HCT116 (cell line): ENCODE measurements at regions of chr17 and their contacts with region 1.

Region 1: DNA sequence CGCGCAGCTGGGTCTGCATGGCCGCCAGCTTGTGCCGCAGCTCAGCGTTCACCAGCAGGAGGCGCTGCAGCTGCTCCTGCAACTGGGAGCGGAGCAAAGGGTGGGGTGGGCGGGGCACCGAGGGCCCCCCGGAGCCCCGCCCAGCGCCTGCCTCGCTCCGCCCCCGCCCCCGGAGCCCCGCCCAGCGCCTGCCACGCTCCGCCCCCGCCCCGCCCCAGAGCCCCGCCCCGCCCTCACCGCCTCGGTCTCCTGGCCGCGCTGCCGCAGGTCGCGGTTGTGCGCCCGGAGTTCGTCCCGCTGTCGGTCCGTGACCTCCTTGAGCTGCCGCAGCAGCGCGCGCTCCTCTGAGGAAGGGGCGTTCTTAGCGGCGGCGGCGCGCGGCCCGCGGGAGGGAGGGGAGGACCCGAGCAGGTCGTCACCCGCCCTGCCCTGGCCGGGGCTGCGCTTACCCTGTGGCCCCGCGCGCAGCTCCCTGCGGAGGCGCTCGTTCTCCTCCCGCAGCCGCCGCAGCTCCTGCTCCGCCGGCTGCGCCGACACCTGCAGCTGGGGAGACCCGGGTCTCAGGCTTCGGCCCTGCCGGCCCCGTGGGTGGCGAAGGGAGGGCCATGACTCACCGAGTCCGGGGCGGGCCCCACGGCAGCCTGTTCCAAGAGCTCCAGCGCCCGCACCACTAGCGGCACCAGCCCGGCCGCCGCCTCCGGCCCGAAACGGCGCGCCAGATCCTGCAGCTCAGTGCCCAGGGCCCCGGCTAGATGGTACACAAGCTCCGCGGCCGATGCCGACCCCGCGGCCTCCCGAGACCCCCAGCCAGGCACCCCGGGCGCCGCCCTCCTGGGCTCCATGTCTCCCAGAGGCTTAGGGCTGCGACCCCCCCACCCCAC is 463 bp downstream of the RILP start:
- DNase-seq: peak; percentile 89
- ATAC-seq: peak; percentile 76
- H3K4me3 ChIP-seq: peak overlapping the region; percentile 40 to 72
- H3K27ac ChIP-seq: peak overlapping the region; percentile 94
- H3K4me1 ChIP-seq: peaks cover 23 to 48% of the 10 kb centered on the region in 2 experiments
- H3K27me3 ChIP-seq: no peaks in the 10 kb centered on the region
- CTCF ChIP-seq: peak in 2 of 3 experiments; percentile 86 to 97; a peak in 5 of 6 replicates
- POLR2A ChIP-seq: no peak
- RAD21 ChIP-seq: peak; percentile 61

Region 2: GRCh38 chr17:1260086-1260769 is 389.0 kb before region 1 on chr17:
- CTCF ChIA-PET with region 1: interaction called, 10 read pairs
- POLR2A ChIA-PET with region 1: no interaction called
- RAD21 ChIA-PET with region 1: no interaction called
- intact Hi-C with region 1: loop called (anchors 5 kb)
- DNase-seq: no peak
- ATAC-seq: no peak
- H3K4me3 ChIP-seq: peak overlapping the region; percentile 48 to 63
- H3K27ac ChIP-seq: peak overlapping the region; percentile 65
- H3K4me1 ChIP-seq: peaks cover 12 to 28% of the 10 kb centered on the region in 2 experiments
- H3K27me3 ChIP-seq: no peaks in the 10 kb centered on the region
- CTCF ChIP-seq: no peak
- POLR2A ChIP-seq: no peak
- RAD21 ChIP-seq: no peak

Region 3: DNA sequence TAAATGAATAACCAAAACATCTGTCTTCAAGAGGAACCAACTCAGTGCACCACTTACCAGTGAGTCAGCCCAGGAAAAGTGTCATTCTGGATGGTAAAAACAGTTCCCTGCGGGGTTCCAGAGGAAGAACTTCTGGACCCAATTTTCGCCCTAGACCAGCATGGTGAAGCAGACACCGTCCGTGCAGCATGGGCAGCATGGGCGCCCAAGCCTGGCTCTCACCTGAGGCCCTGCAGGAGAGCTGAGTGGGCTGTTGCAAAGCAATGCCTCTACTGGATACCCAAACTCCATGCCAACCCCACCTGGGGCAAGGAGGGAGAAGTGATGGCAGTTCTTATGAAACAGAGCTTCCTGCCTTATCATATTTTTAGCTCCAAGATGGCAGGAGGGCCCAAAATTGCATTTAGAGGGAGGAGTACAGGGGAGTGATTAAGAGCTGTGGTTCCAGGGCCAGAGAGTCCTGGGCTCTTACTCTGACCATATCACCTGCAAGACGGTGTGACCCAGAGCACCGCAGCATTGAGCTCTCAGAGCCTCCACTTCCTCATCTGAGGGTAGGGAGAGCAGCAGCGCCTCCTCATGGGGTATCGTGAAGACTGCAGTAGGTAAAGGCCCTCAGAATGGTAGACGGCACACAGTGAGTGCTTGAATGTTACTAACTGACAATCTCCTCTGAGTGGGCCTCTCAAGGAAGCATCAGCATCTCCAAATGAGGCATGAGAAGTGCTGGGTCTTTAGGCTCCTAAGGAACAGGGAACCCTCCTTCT is 116.2 kb before region 1 on chr17:
- CTCF ChIA-PET with region 1: no interaction called
- POLR2A ChIA-PET with region 1: no interaction called
- RAD21 ChIA-PET with region 1: no interaction called
- intact Hi-C with region 1: no loop called
- DNase-seq: no peak
- ATAC-seq: peak; percentile 93
- H3K4me3 ChIP-seq: no peak overlapping the region
- H3K27ac ChIP-seq: no peak overlapping the region
- H3K4me1 ChIP-seq: no peaks in the 10 kb centered on the region
- H3K27me3 ChIP-seq: no peaks in the 10 kb centered on the region
- CTCF ChIP-seq: peak; percentile 17 to 69 (median 52); a peak in 5 of 6 replicates
- POLR2A ChIP-seq: no peak
- RAD21 ChIP-seq: peak; percentile 50

Region 4: DNA sequence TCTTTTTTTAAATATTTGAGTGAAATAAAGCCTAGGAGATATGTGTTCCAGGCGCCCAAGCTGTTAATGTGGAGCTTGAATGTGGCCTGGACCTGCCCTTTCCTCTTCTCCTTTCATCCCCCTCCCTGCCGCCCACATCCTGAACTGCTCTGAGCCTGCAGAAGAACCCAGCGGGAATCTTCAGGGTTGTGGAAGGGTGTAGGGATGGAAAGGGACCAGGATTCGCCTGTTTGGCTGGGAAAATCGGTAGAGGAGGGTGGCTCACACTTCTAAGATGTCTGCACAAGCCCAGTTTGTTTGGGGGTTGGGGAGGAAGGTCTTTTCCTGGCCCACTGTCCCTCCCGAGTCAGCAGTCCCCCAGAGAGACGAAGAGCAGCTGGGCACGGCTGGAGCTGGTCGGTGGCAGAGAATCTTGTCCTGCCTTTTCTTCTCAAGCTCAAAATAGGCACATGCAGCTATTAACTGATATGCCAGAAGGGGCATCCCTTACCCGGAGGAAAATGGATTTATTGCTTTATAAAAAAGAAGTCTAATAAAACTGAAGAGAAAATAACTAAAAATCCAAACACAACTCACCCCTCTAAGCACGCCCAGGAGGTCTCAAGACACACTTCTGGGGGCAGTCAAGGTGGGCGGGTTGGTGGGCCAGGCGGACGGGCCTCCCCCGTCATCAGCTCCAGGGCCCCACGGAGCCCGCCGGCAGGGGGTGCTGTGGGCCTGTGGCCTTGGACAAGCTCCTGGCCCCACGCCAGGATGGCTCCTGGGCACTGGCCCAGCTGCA is 75.1 kb before region 1 on chr17:
- CTCF ChIA-PET with region 1: interaction called, 70 read pairs
- POLR2A ChIA-PET with region 1: interaction called, 9 read pairs
- RAD21 ChIA-PET with region 1: interaction called, 5 to 13 read pairs
- intact Hi-C with region 1: loop called (anchors 2 kb)
- DNase-seq: peak; percentile 60
- ATAC-seq: peak; percentile 88
- H3K4me3 ChIP-seq: no peak overlapping the region
- H3K27ac ChIP-seq: peak overlapping the region; percentile 44
- H3K4me1 ChIP-seq: peaks cover 7 to 20% of the 10 kb centered on the region in 2 experiments; a peak in 3 of 4 replicates
- H3K27me3 ChIP-seq: no peaks in the 10 kb centered on the region
- CTCF ChIP-seq: peak; percentile 89 to 96 (median 95)
- POLR2A ChIP-seq: no peak
- RAD21 ChIP-seq: peak; percentile 97

Region 5: GRCh38 chr17:1617620-1618174 is 31.5 kb before region 1 on chr17:
- CTCF ChIA-PET with region 1: interaction called, 14 read pairs
- POLR2A ChIA-PET with region 1: no interaction called
- RAD21 ChIA-PET with region 1: interaction called in 1 of 2 experiments, 4 read pairs
- intact Hi-C with region 1: no loop called
- DNase-seq: peak; percentile 93
- ATAC-seq: peak; percentile 89
- H3K4me3 ChIP-seq: peak overlapping the region; percentile 8 to 45; a peak in 3 of 4 replicates
- H3K27ac ChIP-seq: peak overlapping the region; percentile 95
- H3K4me1 ChIP-seq: peaks cover 41 to 48% of the 10 kb centered on the region in 2 experiments
- H3K27me3 ChIP-seq: no peaks in the 10 kb centered on the region
- CTCF ChIP-seq: peak; percentile 48 to 56 (median 52); a peak in 5 of 6 replicates
- POLR2A ChIP-seq: no peak
- RAD21 ChIP-seq: peak; percentile 55

Region 6: DNA sequence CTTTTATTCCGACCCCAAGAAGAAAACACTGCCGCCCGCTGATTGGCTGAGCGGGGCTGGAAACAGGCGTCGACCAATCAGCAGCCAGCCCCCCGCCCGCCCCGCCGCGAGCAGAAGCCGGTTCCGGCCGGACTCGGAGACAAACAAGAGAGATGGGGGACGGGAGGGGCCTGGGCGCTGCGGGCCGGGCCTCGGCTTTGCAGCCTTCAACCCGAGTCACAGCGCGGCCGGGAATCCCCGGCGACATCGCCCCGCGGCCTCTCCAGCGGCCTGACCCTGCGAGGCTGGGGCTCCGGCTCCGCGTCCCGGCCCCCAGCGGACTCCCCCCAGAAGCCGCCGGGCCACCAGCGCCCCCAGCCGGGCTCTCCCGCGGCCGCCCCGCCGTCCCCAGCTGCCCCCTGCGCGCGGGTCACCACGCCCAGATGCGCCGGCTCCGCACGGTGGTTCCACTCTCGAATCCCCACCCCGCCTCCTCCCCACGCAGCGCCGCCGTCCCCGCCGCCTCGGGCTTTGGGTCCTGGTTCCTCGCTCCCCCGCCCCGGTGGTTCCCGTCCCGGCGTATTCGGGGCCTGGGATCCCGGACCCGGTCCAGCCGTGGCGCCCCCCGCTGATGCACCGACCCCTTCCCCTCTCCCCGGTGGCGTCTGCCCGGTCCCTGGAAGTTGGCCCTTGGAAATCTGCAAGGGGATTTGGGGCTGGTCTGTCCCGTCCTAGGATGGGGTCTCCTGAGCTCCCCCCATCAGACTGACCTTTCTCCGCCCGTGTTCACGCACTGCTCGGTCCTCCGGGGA is 20.2 kb before region 1 on chr17:
- CTCF ChIA-PET with region 1: interaction called, 22 read pairs
- POLR2A ChIA-PET with region 1: interaction called, 5 read pairs
- RAD21 ChIA-PET with region 1: no interaction called
- intact Hi-C with region 1: no loop called
- DNase-seq: peak; percentile 82
- ATAC-seq: peak; percentile 81
- H3K4me3 ChIP-seq: peak overlapping the region; percentile 85 to 93
- H3K27ac ChIP-seq: peak overlapping the region; percentile 65
- H3K4me1 ChIP-seq: peaks cover 13 to 41% of the 10 kb centered on the region in 2 experiments
- H3K27me3 ChIP-seq: no peaks in the 10 kb centered on the region
- CTCF ChIP-seq: peak in 2 of 3 experiments; percentile 16 to 44; a peak in 1 of 6 replicates
- POLR2A ChIP-seq: no peak
- RAD21 ChIP-seq: no peak; the same call in none of the 2 replicates

Region 7: GRCh38 chr17:1673041-1673785 is 24.0 kb after region 1 on chr17:
- CTCF ChIA-PET with region 1: interaction called, 20 read pairs
- POLR2A ChIA-PET with region 1: no interaction called
- RAD21 ChIA-PET with region 1: no interaction called
- intact Hi-C with region 1: no loop called
- DNase-seq: no peak
- ATAC-seq: no peak
- H3K4me3 ChIP-seq: no peak overlapping the region
- H3K27ac ChIP-seq: no peak overlapping the region
- H3K4me1 ChIP-seq: peaks cover 0 to 3% of the 10 kb centered on the region in 2 experiments; a peak in 1 of 4 replicates
- H3K27me3 ChIP-seq: no peaks in the 10 kb centered on the region
- CTCF ChIP-seq: no peak
- POLR2A ChIP-seq: no peak
- RAD21 ChIP-seq: no peak